Activated naive CD4-positive, alpha-beta T cell treated with anti-CD3 and anti-CD28 coated beads for 36 hours (primary cell): ENCODE measurements at regions of chr18 and their contacts with region 1.

Region 1: DNA sequence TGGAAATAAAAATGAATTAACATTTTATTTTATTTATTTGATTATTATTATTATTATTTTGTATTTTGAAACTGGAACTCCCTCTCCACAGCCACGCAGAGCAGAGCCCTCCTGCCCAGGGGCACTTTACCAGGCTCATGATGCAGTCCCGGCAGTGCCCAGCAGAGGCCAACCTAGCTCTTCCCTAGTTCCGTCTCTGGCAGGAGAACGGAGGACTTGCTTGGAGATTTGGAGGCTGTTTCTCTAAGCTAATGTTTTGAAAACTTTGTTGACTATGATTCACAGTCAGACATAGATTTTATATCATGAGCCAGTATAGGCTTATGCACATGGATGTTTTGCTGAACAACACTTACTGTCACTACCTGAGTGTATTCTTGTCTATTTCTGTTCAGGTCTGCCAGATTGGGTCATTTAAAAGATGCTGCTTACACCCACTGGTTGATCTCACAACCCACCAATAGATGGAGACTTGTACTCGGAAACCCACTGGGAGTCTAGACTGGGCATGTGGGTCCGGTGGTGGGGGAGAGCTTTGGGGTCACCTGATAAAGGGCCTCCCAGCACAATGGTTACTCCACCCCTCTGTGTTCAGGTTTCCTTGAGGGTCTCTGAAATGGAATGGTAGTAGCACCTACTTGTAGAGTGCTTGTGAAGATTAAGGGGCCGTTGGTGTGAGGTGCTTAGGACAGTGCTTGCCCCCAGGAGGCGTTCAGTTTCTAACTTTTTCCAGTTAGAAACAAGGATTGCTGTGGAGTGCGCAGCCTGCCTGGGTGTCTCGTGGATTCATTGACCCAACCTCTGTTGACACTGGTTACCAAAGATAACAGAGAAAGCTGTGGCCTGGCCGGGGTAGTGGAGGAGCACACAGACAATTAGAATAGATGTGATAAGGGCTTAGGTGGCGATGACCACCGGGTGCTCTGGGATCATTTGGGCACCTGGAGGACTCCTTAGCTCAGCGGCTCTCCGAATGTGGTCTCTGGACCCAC is 177.3 kb downstream of the HAUS1 start:
- DNase-seq: peak; percentile 78
- H3K4me3 Mint-ChIP-seq: no peak overlapping the region
- H3K27ac Mint-ChIP-seq: no peak overlapping the region
- H3K4me1 Mint-ChIP-seq: peaks cover 5% of the 10 kb centered on the region
- H3K27me3 Mint-ChIP-seq: no peaks in the 10 kb centered on the region

Region 2: GRCh38 chr18:46481048-46481846 is 199.8 kb after region 1 on chr18:
- CTCF ChIA-PET with region 1: interaction called, 46 read pairs
- intact Hi-C with region 1: loop called (anchors 1 kb)
- DNase-seq: peak; percentile 68
- H3K4me3 Mint-ChIP-seq: no peak overlapping the region
- H3K27ac Mint-ChIP-seq: no peak overlapping the region
- H3K4me1 Mint-ChIP-seq: no peaks in the 10 kb centered on the region
- H3K27me3 Mint-ChIP-seq: no peaks in the 10 kb centered on the region

Region 3: DNA sequence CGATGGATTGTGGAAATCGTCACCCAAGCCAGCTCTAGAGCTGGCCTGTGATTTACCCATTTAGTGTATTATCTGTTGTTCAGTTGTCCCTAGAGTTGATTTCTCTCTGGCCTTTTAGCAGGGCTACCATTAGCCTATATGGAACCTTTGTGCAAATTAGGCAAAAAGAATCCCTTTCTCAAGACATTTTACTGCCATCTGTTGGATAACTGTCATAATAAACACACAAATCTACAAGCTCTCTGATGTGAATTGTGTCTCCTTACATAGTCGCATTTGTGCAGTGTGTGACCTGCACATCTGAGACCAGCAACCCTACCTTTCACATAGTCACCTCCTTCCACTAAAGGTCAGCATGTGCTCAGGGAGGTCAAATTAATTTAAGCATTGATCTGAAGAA is 341.5 kb after region 1 on chr18:
- CTCF ChIA-PET with region 1: interaction called, 15 read pairs
- intact Hi-C with region 1: loop called (anchors 1 kb)
- DNase-seq: no peak
- H3K4me3 Mint-ChIP-seq: no peak overlapping the region
- H3K27ac Mint-ChIP-seq: peak overlapping the region; percentile 71
- H3K4me1 Mint-ChIP-seq: peaks cover 27% of the 10 kb centered on the region
- H3K27me3 Mint-ChIP-seq: no peaks in the 10 kb centered on the region